Heart left ventricle (tissue), 16 donors: ENCODE measurements at regions of chr15 and their contacts with region 1.

Region 1: GRCh38 chr15:51270706-51271105 is 67.7 kb downstream of the CYP19A1 start:
- DNase-seq: no peak
- ATAC-seq: peak in 1 of 4 donors; percentile 71
- H3K4me3 ChIP-seq: no peak overlapping the region
- H3K27ac ChIP-seq: no peak overlapping the region
- H3K4me1 ChIP-seq: peaks cover 0 to 17% (median 6%) of the 10 kb centered on the region in 12 donors
- H3K27me3 ChIP-seq: peaks cover 0 to 27% (median 0%) of the 10 kb centered on the region in 9 donors
- CTCF ChIP-seq: no peak
- POLR2A ChIP-seq: no peak

Region 2: GRCh38 chr15:51229907-51230330 is 40.8 kb before region 1 on chr15:
- intact Hi-C with region 1: loop called in 1 of 10 experiments (anchors 5 kb)
- DNase-seq: no peak
- ATAC-seq: peak; percentile 17 to 76 (median 52)
- H3K4me3 ChIP-seq: no peak overlapping the region
- H3K27ac ChIP-seq: peak overlapping the region in 2 of 12 donors; percentile 3 to 28
- H3K4me1 ChIP-seq: peaks cover 0 to 37% (median 7%) of the 10 kb centered on the region in 12 donors
- H3K27me3 ChIP-seq: no peaks in the 10 kb centered on the region
- CTCF ChIP-seq: peak in 7 of 12 donors; percentile 28 to 56 (median 44)
- POLR2A ChIP-seq: no peak

Region 3: DNA sequence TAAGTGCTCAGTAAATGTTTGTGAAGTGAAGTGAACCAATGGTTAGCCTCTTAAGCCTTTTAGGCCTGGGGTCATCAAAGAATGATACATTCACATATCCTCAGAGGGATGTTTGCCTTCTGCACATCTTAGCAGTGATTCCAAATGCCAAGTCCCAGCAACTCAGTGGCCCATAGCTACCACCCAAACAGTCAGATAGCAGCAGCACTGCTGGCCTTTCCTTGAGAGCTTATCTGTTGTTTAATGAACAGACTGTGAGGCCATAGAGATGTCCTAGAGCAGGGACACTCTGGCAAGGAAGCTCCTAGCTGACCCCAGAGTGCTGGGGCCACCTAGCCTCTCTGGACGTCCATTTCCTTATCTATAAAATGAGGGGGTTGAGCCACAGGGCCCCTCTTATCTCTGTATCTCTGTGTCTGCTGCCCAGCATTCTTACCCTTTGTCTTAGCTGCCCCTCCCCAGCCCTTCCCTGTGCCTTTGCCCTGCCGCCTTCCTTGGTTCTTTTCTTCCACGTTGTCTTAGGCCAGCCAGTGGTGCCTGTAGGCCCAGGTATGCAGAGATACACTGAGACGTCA is 19.1 kb before region 1 on chr15:
- intact Hi-C with region 1: loop called in 1 of 10 experiments (anchors 2 kb)
- DNase-seq: no peak
- ATAC-seq: no peak
- H3K4me3 ChIP-seq: no peak overlapping the region
- H3K27ac ChIP-seq: no peak overlapping the region
- H3K4me1 ChIP-seq: peaks cover 0 to 10% (median 0%) of the 10 kb centered on the region in 12 donors
- H3K27me3 ChIP-seq: peaks cover 0 to 4% (median 0%) of the 10 kb centered on the region in 9 donors
- CTCF ChIP-seq: no peak
- POLR2A ChIP-seq: no peak

Region 4: GRCh38 chr15:52082197-52083036 is 811.7 kb after region 1 on chr15:
- intact Hi-C with region 1: no loop called
- DNase-seq: no peak
- ATAC-seq: no peak
- H3K4me3 ChIP-seq: no peak overlapping the region
- H3K27ac ChIP-seq: no peak overlapping the region
- H3K4me1 ChIP-seq: peaks cover 0 to 28% (median 0%) of the 10 kb centered on the region in 12 donors
- H3K27me3 ChIP-seq: no peaks in the 10 kb centered on the region
- CTCF ChIP-seq: no peak
- POLR2A ChIP-seq: no peak